Activated CD4-positive, alpha-beta T cell treated with anti-CD3 and anti-CD28 coated beads, Interleukin-2, amount 10 ng/mL, durations not matched to agents 7 days and 5 days (primary cell): ENCODE measurements at regions of chr7 and their contacts with region 1.

Region 1: DNA sequence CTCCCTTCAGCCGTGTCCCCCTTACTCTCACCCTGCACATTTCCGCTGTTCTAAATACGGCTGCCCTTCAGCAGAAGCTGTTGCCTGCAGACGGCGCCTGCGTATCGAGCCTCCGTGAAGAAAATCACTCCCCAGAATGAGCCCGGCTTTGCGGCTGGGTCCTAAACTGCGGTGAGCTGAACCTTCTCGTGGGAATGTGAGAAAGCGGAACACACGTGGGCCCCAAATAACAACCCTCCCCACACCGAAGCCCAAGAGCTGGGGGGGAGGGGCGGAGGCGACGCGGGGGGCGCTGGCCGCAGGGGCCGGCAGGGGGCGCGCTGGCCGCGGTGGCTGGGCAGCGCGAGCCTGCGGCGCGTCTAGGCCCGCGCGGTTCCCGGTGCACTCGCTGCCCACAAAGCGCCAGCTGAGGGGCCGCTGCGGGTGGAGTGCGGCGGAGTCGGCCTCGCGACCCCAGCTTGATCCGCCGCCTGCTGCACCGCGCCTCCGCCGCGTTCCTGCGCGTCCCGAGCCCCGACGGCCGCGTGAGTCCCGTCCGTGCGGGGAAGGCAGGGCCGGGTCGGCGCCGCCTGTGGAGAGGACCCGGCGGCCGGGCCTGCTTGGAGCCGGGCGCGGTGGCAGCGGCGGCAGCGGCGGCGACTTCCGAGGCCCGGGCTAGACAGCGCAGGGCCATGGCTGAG is at the start of gene ZNF398:
- DNase-seq: peak; percentile 71
- H3K4me3 Mint-ChIP-seq: peak within 1 kb of the TSS; percentile 87
- H3K27ac Mint-ChIP-seq: peak within 1 kb of the TSS; percentile 95
- H3K4me1 Mint-ChIP-seq: peaks cover 35% of the 10 kb centered on the region
- H3K27me3 Mint-ChIP-seq: no peaks in the 10 kb centered on the region
- total RNA-seq, gene ZNF398: 15.3 to 17.1 TPM

Region 2: DNA sequence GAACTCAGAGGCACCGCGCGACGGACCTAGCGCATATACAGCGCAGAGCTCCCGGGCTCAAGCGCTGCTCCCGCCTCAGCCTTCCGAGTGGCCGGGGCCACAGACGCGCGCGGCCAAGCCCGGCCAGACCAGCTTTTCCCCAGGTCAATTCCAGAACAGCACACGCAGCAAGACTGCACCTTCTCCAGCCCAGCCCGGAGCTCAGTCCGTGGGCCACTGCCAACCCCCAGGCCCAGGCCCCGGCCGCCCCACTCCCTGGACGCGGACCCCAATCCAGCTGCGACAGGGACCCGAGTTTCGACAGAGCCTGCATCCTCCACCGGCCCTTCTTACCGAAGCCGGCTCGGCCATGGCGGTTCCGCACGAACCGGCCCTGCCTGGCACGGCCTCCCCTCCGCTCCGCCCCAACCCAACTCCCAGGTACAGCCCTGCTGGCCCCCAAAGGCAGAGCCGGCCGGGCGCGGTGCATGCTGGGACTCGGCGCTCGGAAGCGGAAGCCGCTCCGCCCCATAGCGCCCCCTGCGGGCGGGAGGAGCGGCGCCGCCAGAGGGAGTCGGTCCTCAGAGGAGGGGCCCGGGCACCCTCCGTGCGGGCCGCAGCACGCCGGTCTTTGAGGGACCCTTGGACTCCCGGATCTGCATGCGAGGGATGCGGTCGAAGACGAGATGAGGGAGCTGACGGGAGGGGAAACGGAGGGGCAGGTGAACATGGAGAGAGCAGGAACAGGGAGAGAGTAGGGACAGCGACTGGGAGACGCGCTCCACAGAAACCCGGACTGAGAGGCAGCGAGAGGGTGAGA is 21.1 kb before region 1 on chr7 and contains the start of gene ZNF425:
- CTCF ChIA-PET with region 1: interaction called, 31 read pairs
- POLR2A ChIA-PET with region 1: interaction called, 10 read pairs
- DNase-seq: peak; percentile 92
- H3K4me3 Mint-ChIP-seq: peak within 1 kb of the TSS; percentile 97
- H3K27ac Mint-ChIP-seq: peak within 1 kb of the TSS; percentile 99
- H3K4me1 Mint-ChIP-seq: peaks cover 25% of the 10 kb centered on the region
- H3K27me3 Mint-ChIP-seq: no peaks in the 10 kb centered on the region
- total RNA-seq, gene ZNF425: 0.67 to 1.0 TPM

Region 3: GRCh38 chr7:149133028-149133705 is 14.0 kb before region 1 on chr7:
- CTCF ChIA-PET with region 1: interaction called, 40 read pairs
- POLR2A ChIA-PET with region 1: interaction called, 3 read pairs
- DNase-seq: no peak
- H3K4me3 Mint-ChIP-seq: no peak overlapping the region
- H3K27ac Mint-ChIP-seq: no peak overlapping the region
- H3K4me1 Mint-ChIP-seq: peaks cover 7% of the 10 kb centered on the region
- H3K27me3 Mint-ChIP-seq: no peaks in the 10 kb centered on the region

Region 4: GRCh38 chr7:149161241-149161848 is 14.1 kb after region 1 on chr7:
- CTCF ChIA-PET with region 1: interaction called, 12 read pairs
- POLR2A ChIA-PET with region 1: no interaction called
- DNase-seq: no peak
- H3K4me3 Mint-ChIP-seq: no peak overlapping the region
- H3K27ac Mint-ChIP-seq: peak overlapping the region; percentile 10
- H3K4me1 Mint-ChIP-seq: peaks cover 31% of the 10 kb centered on the region
- H3K27me3 Mint-ChIP-seq: no peaks in the 10 kb centered on the region

Region 5: GRCh38 chr7:149195180-149196150 is 48.3 kb after region 1 on chr7 and contains the start of gene ZNF282:
- CTCF ChIA-PET with region 1: interaction called, 21 read pairs
- POLR2A ChIA-PET with region 1: no interaction called
- DNase-seq: peak; percentile 74
- H3K4me3 Mint-ChIP-seq: peak within 1 kb of the TSS; percentile 93
- H3K27ac Mint-ChIP-seq: peak within 1 kb of the TSS; percentile 90
- H3K4me1 Mint-ChIP-seq: peaks cover 52% of the 10 kb centered on the region
- H3K27me3 Mint-ChIP-seq: peaks cover 4% of the 10 kb centered on the region
- total RNA-seq, gene ZNF282: 28.2 to 29.4 TPM